ENCODE measurements at regions of chr1 and their contacts with region 1.

Region 1: DNA sequence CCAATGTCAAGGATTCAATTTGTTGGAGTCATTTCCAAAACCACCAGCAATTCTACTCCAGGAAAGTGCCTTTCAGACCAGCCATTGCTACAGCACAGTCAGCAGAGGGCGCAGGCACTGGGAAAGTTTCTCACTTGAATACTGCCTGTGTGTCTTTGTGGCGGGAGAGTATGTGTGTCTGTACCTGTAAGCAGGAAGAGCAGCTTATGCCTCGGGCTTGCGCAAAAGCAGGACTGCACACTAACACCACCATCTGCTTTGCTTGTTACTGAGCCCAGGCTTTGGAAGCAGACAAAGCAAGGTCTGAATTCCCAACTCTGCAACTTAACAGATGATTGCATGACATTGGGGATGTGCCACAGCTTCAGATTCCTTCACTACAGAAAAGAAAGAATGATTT is 7.0 kb upstream of the CTSE start:
- DNase-seq: peak; percentile 74
- H3K4me3 Mint-ChIP-seq: no peak overlapping the region
- H3K27ac Mint-ChIP-seq: no peak overlapping the region
- H3K4me1 Mint-ChIP-seq: peaks cover 7% of the 10 kb centered on the region
- H3K27me3 Mint-ChIP-seq: peaks cover 36% of the 10 kb centered on the region

Region 2: GRCh38 chr1:206004783-206005164 is 25.9 kb before region 1 on chr1:
- CTCF ChIA-PET with region 1: no interaction called
- POLR2A ChIA-PET with region 1: no interaction called
- DNase-seq: peak; percentile 11
- H3K4me3 Mint-ChIP-seq: no peak overlapping the region
- H3K27ac Mint-ChIP-seq: no peak overlapping the region
- H3K4me1 Mint-ChIP-seq: peaks cover 13% of the 10 kb centered on the region
- H3K27me3 Mint-ChIP-seq: peaks cover 9% of the 10 kb centered on the region

Region 3: DNA sequence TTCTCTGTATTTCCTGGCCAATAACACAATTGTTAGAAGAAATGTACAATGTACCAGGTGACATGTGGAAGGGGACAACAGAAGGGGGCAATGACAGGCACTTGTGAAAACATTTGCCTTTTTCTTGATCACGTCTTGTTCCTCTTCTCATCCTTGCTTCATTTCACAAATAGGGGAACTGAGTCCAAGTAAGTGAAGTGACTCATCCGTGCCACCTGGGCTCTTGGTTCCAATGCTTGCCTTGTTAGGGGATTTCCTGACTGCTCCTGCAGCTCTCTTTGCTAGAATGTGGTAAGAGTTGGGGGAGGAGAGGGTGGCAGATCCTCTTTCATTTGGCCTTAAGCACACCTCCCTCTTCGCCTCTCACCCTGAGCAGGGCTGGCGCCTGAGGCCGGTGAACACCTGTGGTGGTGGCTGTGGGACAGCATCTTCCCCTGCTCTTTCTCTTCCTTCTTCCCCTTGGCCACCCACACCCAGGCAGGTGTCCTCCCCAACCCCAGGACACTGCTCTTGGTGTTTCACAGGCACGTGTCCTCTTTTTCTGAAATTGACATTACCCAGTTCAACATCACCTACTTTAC is 20.0 kb after region 1 on chr1:
- CTCF ChIA-PET with region 1: interaction called, 17 read pairs
- POLR2A ChIA-PET with region 1: no interaction called
- DNase-seq: peak; percentile 46
- H3K4me3 Mint-ChIP-seq: peak overlapping the region; percentile 4
- H3K27ac Mint-ChIP-seq: peak overlapping the region; percentile 68
- H3K4me1 Mint-ChIP-seq: peaks cover 38% of the 10 kb centered on the region
- H3K27me3 Mint-ChIP-seq: peaks cover 9% of the 10 kb centered on the region

Measured in activated CD4-positive, alpha-beta memory T cell treated with anti-CD3 and anti-CD28 coated beads, Interleukin-2, amount 10 ng/mL, durations not matched to agents 7 days and 5 days (primary cell).